Head of caudate nucleus (tissue), 42 donors: ENCODE measurements at regions of chr19 and their contacts with region 1.

Region 1: DNA sequence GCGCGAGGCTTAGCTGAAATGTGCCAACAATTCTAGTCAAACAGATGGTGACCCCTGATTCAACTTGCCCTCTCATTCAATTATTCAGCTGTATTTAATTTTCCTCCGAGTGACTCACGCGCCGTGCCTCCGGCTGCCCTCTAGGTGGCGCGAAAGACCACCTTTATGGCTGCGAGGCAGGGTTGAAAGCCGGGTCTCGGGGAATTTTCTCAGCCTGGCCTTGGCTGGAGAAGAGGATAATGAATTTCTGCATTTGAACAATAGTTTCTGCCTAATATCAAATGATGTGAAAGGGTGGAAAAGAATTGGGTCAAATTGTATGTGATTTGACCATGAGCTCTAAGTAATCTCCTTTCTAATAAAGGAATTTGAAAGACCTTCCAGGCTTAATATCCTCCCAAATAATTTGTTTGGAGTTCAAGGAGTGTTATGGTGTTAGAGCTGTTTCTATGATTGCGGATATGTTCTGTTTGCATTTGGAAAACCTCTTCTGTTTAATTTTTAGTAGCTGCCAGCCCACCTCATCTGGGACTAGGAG is 310.9 kb downstream of the ZNF536 start:
- DNase-seq: peak; percentile 66 to 94 (median 84)

Region 2: GRCh38 chr19:30546332-30546731 is 136.7 kb before region 1 on chr19:
- intact Hi-C with region 1: no loop called
- DNase-seq: peak in 2 of 42 donors; percentile 43 to 62

Region 3: GRCh38 chr19:30722186-30722585 is 39.1 kb after region 1 on chr19:
- intact Hi-C with region 1: no loop called
- DNase-seq: no peak

Region 4: DNA sequence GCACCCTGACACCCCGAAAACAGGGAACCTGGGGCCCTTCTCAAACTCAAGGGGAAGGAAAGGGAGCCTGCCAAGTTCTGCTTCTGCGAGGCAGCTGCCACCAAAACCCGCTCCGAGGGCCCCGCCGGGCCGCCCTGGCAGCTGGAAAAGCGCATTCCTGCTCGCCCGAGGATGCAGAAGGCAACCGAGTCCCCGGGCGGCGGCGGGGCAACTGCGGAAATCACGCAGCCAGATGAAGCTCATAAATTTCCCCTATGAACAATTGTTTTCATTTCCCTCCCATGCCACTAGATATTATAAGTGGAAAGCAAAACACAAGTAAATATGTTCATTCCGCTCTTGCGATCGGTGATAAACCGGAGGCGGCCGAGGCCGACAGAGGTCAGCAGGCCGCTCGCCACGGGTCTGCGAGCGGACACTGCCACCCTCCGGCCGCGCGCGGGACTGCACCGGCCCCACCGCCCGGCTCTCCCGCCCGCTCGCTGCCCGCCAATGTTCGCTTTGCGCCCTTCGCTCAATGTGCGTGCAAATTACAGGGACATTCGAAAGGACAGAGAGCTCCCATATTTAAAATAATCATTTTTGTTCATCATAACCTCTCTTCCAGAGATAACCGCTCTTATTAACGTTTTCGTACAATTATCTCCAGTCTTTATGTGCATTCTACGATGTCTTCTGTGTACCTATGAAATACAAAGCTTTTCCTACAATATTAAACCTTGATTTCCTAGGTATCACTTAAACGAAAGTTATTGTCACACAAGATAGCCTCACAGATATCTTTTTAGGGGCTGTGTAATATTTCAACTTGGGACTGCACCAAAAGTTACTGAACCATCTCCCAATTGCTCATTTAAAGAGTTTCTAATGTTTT is 1541.5 kb after region 1 on chr19:
- intact Hi-C with region 1: loop called (anchors 10 kb)
- DNase-seq: peak in 40 of 42 donors; percentile 21 to 87 (median 66)